ENCODE measurements at regions of chr17 and their contacts with region 1.

Region 1: GRCh38 chr17:58281446-58282011 is 794 bp upstream of the MPO start:
- DNase-seq: no peak
- H3K4me3 ChIP-seq: no peak overlapping the region
- H3K4me3 Mint-ChIP-seq: no peak overlapping the region
- H3K27ac Mint-ChIP-seq: no peak overlapping the region
- H3K4me1 ChIP-seq: no peaks in the 10 kb centered on the region
- H3K4me1 Mint-ChIP-seq: peaks cover 6% of the 10 kb centered on the region
- H3K27me3 ChIP-seq: no peaks in the 10 kb centered on the region
- H3K27me3 Mint-ChIP-seq: no peaks in the 10 kb centered on the region
- CTCF ChIP-seq: no peak

Region 2: GRCh38 chr17:57955183-57955931 is 326.2 kb before region 1 on chr17 and contains the start of gene CUEDC1:
- CTCF ChIA-PET with region 1: no interaction called
- POLR2A ChIA-PET with region 1: no interaction called
- intact Hi-C with region 1: no loop called
- DNase-seq: peak; percentile 76 to 90
- H3K4me3 ChIP-seq: peak within 1 kb of the TSS; percentile 69
- H3K4me3 Mint-ChIP-seq: peak within 1 kb of the TSS; percentile 72
- H3K27ac Mint-ChIP-seq: peak within 1 kb of the TSS; percentile 53
- H3K4me1 ChIP-seq: peaks cover 47% of the 10 kb centered on the region
- H3K4me1 Mint-ChIP-seq: peaks cover 36% of the 10 kb centered on the region
- H3K27me3 ChIP-seq: no peaks in the 10 kb centered on the region
- H3K27me3 Mint-ChIP-seq: no peaks in the 10 kb centered on the region
- CTCF ChIP-seq: peak; percentile 22 to 40
- total RNA-seq, gene CUEDC1: 27.5 TPM in 2 replicates

Region 3: DNA sequence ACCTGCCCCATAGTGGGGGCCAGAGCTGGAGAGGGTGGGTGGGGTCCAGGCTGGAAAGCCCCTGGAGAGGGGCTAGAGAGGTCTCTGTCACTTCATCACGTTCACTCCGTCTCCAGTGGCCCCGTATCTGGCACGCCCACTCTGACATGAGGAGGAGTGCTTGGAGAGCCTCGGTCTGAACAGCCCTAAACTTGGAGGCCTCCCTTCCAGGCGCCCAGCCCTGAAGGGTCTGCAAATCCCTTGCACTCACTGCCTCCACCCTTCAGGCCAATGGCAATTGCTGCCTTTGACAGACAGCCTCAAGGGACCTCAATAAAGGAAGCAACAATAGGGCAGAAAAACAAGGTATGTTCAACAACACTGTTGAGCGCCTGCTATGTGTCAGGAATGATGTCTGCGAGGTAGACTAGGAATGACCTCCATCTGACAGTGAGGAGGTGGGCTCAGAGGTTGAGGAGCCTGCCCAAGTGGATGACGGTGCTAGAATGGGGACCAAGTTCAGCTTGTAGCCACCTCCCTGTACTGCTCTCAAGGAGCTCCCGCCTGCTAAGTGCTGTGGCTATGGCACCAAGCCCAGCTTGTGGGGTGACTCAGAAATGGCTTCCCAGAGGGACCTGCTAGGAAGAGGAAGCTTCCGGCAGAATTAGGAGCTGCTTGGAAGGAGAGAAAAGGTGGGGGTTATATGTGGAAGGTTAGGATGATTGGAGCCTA is 91.9 kb before region 1 on chr17:
- CTCF ChIA-PET with region 1: no interaction called
- POLR2A ChIA-PET with region 1: no interaction called
- intact Hi-C with region 1: no loop called
- DNase-seq: no peak
- H3K4me3 ChIP-seq: no peak overlapping the region
- H3K4me3 Mint-ChIP-seq: no peak overlapping the region
- H3K27ac Mint-ChIP-seq: no peak overlapping the region
- H3K4me1 ChIP-seq: peaks cover 8% of the 10 kb centered on the region
- H3K4me1 Mint-ChIP-seq: peaks cover 8% of the 10 kb centered on the region
- H3K27me3 ChIP-seq: no peaks in the 10 kb centered on the region
- H3K27me3 Mint-ChIP-seq: peaks cover 8% of the 10 kb centered on the region
- CTCF ChIP-seq: no peak

Region 4: GRCh38 chr17:58224315-58224714 is 57.2 kb before region 1 on chr17:
- CTCF ChIA-PET with region 1: no interaction called
- POLR2A ChIA-PET with region 1: no interaction called
- intact Hi-C with region 1: no loop called
- DNase-seq: no peak
- H3K4me3 ChIP-seq: no peak overlapping the region
- H3K4me3 Mint-ChIP-seq: no peak overlapping the region
- H3K27ac Mint-ChIP-seq: no peak overlapping the region
- H3K4me1 ChIP-seq: no peaks in the 10 kb centered on the region
- H3K4me1 Mint-ChIP-seq: peaks cover 9% of the 10 kb centered on the region
- H3K27me3 ChIP-seq: no peaks in the 10 kb centered on the region; the same call in 1 of the 2 replicates
- H3K27me3 Mint-ChIP-seq: peaks cover 5% of the 10 kb centered on the region
- CTCF ChIP-seq: no peak

Region 5: DNA sequence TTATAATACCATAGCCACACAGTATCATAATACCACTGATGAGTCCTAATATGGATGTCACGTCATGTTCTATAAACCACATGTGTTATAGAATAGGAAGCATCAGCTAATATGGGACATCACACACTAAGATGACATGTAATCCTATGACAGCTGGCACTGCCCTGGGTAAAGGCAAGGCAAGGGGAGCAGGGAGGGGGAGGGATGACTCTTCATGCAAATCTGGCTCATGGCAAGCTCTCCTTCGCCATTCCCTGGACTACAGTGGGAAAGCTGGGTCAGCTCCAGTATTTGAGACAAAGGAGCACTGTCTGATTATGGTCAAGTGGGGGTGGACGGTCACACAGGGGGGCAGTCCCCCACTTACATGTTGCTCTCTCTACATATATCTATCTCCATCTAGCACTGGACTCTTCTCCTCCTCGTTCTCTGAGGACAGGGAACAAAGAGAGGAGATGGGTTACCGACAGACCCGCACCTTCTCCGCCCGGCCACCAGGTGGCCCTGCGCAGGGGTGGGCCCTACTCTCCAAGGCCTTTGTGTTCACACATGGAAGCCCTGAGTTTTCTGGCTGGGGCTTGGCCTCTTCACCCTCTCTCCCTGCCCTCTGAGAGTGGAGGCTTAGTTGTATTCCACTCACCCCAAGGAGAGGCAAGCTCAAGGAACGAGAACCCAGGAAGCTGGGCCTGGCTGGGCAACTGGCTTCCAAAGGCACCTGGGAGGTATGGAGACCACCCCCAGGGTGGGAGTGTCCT is 22.6 kb after region 1 on chr17:
- CTCF ChIA-PET with region 1: interaction called, 11 read pairs
- POLR2A ChIA-PET with region 1: no interaction called
- intact Hi-C with region 1: no loop called
- DNase-seq: peak; percentile 69 to 76
- H3K4me3 ChIP-seq: no peak overlapping the region
- H3K4me3 Mint-ChIP-seq: no peak overlapping the region
- H3K27ac Mint-ChIP-seq: no peak overlapping the region
- H3K4me1 ChIP-seq: no peaks in the 10 kb centered on the region
- H3K4me1 Mint-ChIP-seq: peaks cover 5% of the 10 kb centered on the region
- H3K27me3 ChIP-seq: no peaks in the 10 kb centered on the region
- H3K27me3 Mint-ChIP-seq: no peaks in the 10 kb centered on the region
- CTCF ChIP-seq: peak; percentile 85 to 91

Region 6: DNA sequence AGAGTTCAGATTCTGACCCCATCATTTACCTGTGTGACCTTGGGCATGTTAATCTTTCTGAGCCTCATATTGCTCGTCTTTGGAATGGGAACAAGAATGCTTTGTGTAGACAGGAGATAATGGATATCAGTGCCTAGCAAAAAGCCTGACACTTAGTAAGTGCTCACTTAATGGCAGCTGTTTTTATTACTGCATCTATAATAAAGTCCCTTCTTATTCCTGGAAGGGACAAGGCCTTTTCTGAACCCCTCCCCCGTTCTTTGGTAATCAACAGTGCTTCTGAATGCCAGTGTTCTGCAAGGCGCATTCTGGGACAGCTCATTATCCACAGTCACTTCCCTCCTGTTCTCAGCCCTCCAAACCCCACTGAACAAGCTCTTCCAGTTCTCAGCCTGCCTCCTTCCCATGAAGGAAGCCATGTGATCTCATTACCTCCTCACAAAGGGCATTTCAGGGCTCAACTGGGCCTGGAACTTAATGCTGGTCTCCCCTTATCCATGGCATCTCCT is 95.6 kb after region 1 on chr17:
- CTCF ChIA-PET with region 1: no interaction called
- POLR2A ChIA-PET with region 1: no interaction called
- intact Hi-C with region 1: no loop called
- DNase-seq: peak; percentile 81 to 89
- H3K4me3 ChIP-seq: no peak overlapping the region
- H3K4me3 Mint-ChIP-seq: peak overlapping the region; percentile 25
- H3K27ac Mint-ChIP-seq: peak overlapping the region; percentile 58
- H3K4me1 ChIP-seq: peaks cover 88% of the 10 kb centered on the region
- H3K4me1 Mint-ChIP-seq: peaks cover 74% of the 10 kb centered on the region
- H3K27me3 ChIP-seq: no peaks in the 10 kb centered on the region
- H3K27me3 Mint-ChIP-seq: no peaks in the 10 kb centered on the region
- CTCF ChIP-seq: no peak

Measured in Caco-2 (cell line).